Ascending aorta (tissue), 2 donors: ENCODE measurements at regions of chr1 and their contacts with region 1.

Region 1: DNA sequence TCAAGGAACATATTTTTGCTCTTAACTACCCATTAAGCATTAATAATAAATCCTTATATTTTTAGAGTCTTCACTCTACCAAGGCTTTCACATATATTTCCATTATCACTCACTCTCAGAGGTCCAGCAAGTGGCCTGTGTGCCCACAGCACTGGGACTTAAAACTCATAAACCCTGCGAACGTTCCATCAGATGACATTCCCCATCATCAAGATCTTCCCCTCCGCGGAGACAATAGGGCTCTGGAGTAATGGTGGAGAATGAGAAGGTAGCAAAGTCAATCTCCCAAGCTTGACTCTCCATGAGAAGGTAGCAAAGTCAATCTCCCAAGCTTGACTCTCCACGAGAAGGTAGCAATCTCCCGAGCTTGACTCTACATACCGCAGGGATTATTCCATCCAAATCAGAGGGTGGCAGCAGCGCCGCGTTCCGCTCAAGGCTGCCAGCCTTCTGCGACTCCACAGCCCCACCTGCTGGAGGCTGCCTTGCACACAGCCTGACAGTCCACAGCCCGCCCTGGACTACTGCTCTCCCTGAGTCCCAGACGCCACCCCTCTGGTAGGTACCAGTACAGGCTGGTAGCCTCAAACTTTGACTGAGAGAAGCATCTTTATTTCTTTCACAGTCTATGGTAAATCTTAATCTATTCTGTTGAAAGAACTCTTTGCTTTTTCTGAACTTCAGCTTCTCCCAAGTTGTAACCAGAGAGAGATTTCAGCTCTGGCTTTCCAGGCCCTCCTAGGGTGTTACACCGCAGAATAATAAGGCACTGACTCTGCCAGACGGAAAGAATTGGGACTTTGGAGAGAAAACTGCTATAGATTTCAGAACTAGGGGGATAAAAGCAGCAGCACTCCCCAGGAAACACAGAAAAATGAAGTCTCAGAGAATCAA is 26.4 kb upstream of the CTTNBP2NL start:
- DNase-seq: peak in 1 of 2 donors; percentile 94
- H3K4me3 ChIP-seq: no peak overlapping the region
- H3K27ac ChIP-seq: no peak overlapping the region
- H3K4me1 ChIP-seq: no peaks in the 10 kb centered on the region
- H3K27me3 ChIP-seq: no peaks in the 10 kb centered on the region
- CTCF ChIP-seq: peak; percentile 88 to 98 (median 96)

Region 2: DNA sequence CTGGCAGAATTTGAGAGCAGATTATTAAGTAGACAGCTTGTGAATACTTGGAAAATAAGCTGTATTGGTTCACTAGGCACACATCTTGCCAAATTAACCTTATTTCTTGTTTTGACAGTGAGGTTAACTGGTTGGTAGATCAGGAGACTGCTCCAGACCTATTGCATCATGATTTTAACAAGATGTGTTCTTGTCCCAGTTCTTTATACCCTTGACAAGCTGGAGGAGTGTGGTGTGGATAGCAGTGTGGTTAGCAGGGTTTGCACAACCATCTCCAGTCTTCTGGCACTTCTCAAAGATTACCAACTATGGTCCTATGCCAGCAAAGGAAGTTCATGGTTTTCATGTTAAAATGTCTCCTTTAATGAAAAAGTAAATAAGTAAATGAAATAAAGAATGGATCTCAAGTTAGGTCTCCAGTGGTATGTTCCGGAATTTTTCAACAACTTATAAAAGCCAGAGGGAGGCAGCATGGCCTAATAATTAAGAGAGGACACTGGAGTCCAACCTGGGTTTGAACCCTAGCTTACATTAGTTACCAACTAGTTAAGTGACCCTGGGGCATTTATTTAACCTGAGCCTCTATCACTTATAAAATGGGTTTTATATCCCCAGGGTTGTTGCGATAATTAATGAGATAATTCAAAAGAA is 579.8 kb before region 1 on chr1:
- intact Hi-C with region 1: loop called (anchors 10 kb)
- DNase-seq: no peak
- H3K4me3 ChIP-seq: no peak overlapping the region
- H3K27ac ChIP-seq: no peak overlapping the region
- H3K4me1 ChIP-seq: no peaks in the 10 kb centered on the region
- H3K27me3 ChIP-seq: no peaks in the 10 kb centered on the region
- CTCF ChIP-seq: peak in 2 of 3 experiments; percentile 7 to 33

Region 3: DNA sequence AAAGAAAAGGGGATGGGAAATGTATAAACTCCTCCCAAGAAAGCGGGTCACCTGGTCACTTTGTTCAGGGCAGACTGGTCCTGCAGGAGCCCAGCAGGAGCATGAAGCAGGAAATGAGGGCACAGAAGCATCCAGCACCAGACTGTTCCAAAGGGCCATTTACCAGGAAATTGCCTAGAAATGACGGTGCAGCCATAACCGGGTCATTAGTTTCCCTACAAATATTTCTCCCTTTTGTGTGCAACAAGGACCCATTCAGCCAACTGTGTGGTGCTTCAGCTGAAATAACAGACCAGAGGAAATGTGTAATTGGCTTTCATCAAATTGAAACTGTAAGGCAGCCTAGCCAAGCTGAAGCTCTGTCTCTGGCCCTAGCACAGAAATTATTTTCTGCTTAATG is 18.8 kb after region 1 on chr1:
- intact Hi-C with region 1: no loop called
- DNase-seq: peak in 1 of 2 donors; percentile 62
- H3K4me3 ChIP-seq: no peak overlapping the region
- H3K27ac ChIP-seq: peak overlapping the region; percentile 92 to 98
- H3K4me1 ChIP-seq: peaks cover 0 to 25% of the 10 kb centered on the region in 2 donors
- H3K27me3 ChIP-seq: no peaks in the 10 kb centered on the region
- CTCF ChIP-seq: no peak

Region 4: DNA sequence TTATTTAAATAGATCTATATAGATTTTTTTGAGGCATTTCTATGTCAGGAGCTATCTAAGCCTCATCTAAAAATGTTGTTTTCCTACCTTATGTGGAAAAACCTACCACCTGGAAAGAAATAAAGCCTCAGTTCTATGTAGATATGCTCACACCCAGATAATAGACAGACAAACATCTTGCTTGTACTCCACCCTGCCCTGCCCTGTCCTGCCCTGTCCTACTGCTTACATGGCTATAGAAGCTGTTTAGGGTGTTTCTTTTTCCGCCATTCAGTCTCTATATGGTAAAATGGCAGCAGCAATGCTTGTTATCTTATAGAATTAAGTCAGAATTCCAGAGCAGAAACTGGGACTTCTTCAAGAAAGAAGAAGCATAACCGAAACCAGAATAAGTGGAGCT is 39.8 kb after region 1 on chr1:
- intact Hi-C with region 1: loop called (anchors 2 kb)
- DNase-seq: no peak
- H3K4me3 ChIP-seq: no peak overlapping the region
- H3K27ac ChIP-seq: no peak overlapping the region
- H3K4me1 ChIP-seq: peaks cover 0 to 4% of the 10 kb centered on the region in 2 donors
- H3K27me3 ChIP-seq: no peaks in the 10 kb centered on the region
- CTCF ChIP-seq: no peak

Region 5: DNA sequence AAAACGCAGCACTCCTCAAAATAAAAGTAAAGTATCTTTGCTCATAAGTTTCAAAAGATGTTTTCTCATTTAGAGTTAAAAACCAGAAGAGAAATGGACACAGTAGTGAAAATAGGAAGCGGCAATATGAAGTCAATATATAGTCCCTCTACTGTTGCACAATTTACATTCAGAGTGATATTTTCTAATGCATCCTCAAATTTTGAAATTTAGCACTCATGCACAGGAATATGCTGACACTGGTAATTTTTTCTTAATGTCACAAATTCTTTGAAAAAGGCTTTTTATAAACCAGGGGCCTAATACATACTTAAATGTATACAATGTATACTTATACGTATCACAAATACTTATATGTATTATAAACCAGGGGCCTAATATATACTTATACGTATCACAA is 229.8 kb after region 1 on chr1:
- intact Hi-C with region 1: no loop called
- DNase-seq: no peak
- H3K4me3 ChIP-seq: no peak overlapping the region
- H3K27ac ChIP-seq: no peak overlapping the region
- H3K4me1 ChIP-seq: no peaks in the 10 kb centered on the region
- H3K27me3 ChIP-seq: no peaks in the 10 kb centered on the region
- CTCF ChIP-seq: no peak